SK-N-SH (cell line): ENCODE measurements at regions of chr6 and their contacts with region 1.

Region 1: GRCh38 chr6:93423542-93423941 is 4.2 kb upstream of the EPHA7 start:
- DNase-seq: peak; percentile 31
- H3K4me3 ChIP-seq: no peak overlapping the region; a peak in 1 of 4 replicates
- H3K27ac ChIP-seq: no peak overlapping the region
- H3K4me1 ChIP-seq: peaks cover 0 to 10% of the 10 kb centered on the region in 2 experiments; a peak in 2 of 4 replicates
- H3K27me3 ChIP-seq: peaks cover 25% of the 10 kb centered on the region
- CTCF ChIP-seq: peak; percentile 55
- EP300 ChIP-seq: no peak
- RAD21 ChIP-seq: peak; percentile 47

Region 2: DNA sequence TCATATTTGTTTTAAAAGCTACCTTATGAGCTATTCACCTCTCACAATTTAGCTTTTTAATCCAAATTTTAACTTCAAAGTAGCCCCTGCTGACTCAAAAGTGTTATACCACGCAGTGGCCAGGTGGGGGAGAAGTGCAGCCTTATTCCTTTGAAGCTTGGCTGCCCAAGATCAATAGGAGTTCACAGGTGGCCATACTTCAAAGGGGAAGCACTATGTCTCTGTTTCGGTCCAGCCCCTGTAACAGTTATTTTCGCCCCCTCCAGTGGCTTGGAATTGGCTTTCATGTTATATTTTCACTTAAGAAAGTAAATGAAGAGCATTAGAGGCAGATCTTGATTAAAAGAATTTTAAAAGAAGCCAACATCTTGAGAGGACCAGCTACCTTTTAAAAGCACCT is 612.6 kb before region 1 on chr6:
- CTCF ChIA-PET with region 1: interaction called, 15 read pairs
- POLR2A ChIA-PET with region 1: no interaction called
- DNase-seq: peak; percentile 47
- H3K4me3 ChIP-seq: peak overlapping the region in 1 of 2 experiments; percentile 20; a peak in 1 of 4 replicates
- H3K27ac ChIP-seq: no peak overlapping the region
- H3K4me1 ChIP-seq: no peaks in the 10 kb centered on the region
- H3K27me3 ChIP-seq: no peaks in the 10 kb centered on the region
- CTCF ChIP-seq: peak; percentile 61
- EP300 ChIP-seq: no peak
- RAD21 ChIP-seq: peak; percentile 53

Region 3: GRCh38 chr6:93282521-93283031 is 141.0 kb before region 1 on chr6:
- CTCF ChIA-PET with region 1: no interaction called
- POLR2A ChIA-PET with region 1: no interaction called
- DNase-seq: no peak
- H3K4me3 ChIP-seq: no peak overlapping the region
- H3K27ac ChIP-seq: no peak overlapping the region
- H3K4me1 ChIP-seq: no peaks in the 10 kb centered on the region
- H3K27me3 ChIP-seq: no peaks in the 10 kb centered on the region
- CTCF ChIP-seq: no peak
- EP300 ChIP-seq: no peak
- RAD21 ChIP-seq: no peak

Region 4: DNA sequence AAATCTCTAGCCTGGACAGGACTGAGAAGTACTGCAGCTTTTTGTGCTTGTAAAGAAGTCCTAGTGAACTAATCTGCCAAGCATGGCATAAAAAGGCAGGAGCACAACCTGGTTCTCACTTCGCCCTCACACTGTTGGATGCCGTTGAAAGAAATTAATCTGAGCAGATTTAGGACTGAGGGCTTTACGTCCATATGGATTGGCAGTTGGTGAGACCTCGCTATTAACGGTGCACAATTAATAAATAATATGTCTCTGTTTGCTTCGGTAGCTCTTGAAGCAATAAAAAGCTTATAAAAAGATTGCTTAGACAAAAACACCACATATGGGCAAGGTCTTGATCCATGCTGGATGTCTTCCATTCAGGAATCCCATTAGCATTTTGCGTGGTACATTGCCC is 181.4 kb after region 1 on chr6:
- CTCF ChIA-PET with region 1: no interaction called
- POLR2A ChIA-PET with region 1: no interaction called
- DNase-seq: no peak
- H3K4me3 ChIP-seq: no peak overlapping the region
- H3K27ac ChIP-seq: no peak overlapping the region
- H3K4me1 ChIP-seq: no peaks in the 10 kb centered on the region
- H3K27me3 ChIP-seq: no peaks in the 10 kb centered on the region
- CTCF ChIP-seq: no peak
- EP300 ChIP-seq: no peak
- RAD21 ChIP-seq: no peak

Region 5: GRCh38 chr6:95091823-95092436 is 1668.4 kb after region 1 on chr6:
- CTCF ChIA-PET with region 1: interaction called, 17 read pairs
- POLR2A ChIA-PET with region 1: no interaction called
- DNase-seq: peak; percentile 21
- H3K4me3 ChIP-seq: peak overlapping the region in 1 of 2 experiments; percentile 31; a peak in 1 of 4 replicates
- H3K27ac ChIP-seq: no peak overlapping the region
- H3K4me1 ChIP-seq: peaks cover 2 to 11% of the 10 kb centered on the region in 2 experiments; a peak in 3 of 4 replicates
- H3K27me3 ChIP-seq: no peaks in the 10 kb centered on the region
- CTCF ChIP-seq: peak; percentile 75
- EP300 ChIP-seq: no peak
- RAD21 ChIP-seq: peak; percentile 81